B cell (primary cell): ENCODE measurements at regions of chr10 and their contacts with region 1.

Region 1: GRCh38 chr10:58177362-58177947 is 90.2 kb downstream of the IPMK start:
- DNase-seq: peak; percentile 37
- ATAC-seq: peak; percentile 31
- H3K4me3 ChIP-seq: no peak overlapping the region
- H3K4me3 Mint-ChIP-seq: no peak overlapping the region
- H3K27ac ChIP-seq: no peak overlapping the region
- H3K27ac Mint-ChIP-seq: no peak overlapping the region
- H3K4me1 ChIP-seq: no peaks in the 10 kb centered on the region
- H3K4me1 Mint-ChIP-seq: no peaks in the 10 kb centered on the region
- H3K27me3 ChIP-seq: no peaks in the 10 kb centered on the region
- H3K27me3 Mint-ChIP-seq: no peaks in the 10 kb centered on the region
- CTCF ChIP-seq: peak; percentile 82

Region 2: GRCh38 chr10:58282615-58283014 is 105.2 kb after region 1 on chr10:
- CTCF ChIA-PET with region 1: interaction called, 13 read pairs
- POLR2A ChIA-PET with region 1: no interaction called
- intact Hi-C with region 1: no loop called
- DNase-seq: peak; percentile 66
- ATAC-seq: peak; percentile 85
- H3K4me3 ChIP-seq: peak overlapping the region in 1 of 5 experiments; percentile 15
- H3K4me3 Mint-ChIP-seq: peak overlapping the region; percentile 55
- H3K27ac ChIP-seq: peak overlapping the region in 1 of 2 donors; percentile 71
- H3K27ac Mint-ChIP-seq: peak overlapping the region; percentile 88
- H3K4me1 ChIP-seq: peaks cover 9 to 12% of the 10 kb centered on the region in 2 donors
- H3K4me1 Mint-ChIP-seq: peaks cover 17% of the 10 kb centered on the region
- H3K27me3 ChIP-seq: no peaks in the 10 kb centered on the region
- H3K27me3 Mint-ChIP-seq: no peaks in the 10 kb centered on the region
- CTCF ChIP-seq: no peak

Region 3: DNA sequence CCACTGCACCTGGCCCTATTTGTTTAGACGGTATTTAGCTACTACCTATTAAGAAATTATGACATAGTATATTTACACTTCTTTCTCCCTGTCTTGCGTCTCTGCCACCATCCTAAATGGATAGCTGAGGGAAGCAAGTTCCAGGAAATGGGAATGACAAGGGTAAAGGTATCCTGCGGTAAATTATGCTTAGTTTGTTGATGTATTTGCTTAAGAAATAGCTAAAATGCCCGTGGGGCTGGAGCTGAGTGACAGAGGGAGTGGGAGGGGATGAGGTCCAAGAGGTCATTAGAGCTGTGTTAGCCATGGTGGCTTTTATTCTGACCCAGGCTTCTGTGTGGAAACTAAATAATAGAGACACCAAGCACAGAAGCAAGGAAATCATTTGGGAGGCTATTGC is 128.4 kb after region 1 on chr10:
- CTCF ChIA-PET with region 1: interaction called, 22 read pairs
- POLR2A ChIA-PET with region 1: no interaction called
- intact Hi-C with region 1: no loop called
- DNase-seq: no peak
- ATAC-seq: no peak
- H3K4me3 ChIP-seq: no peak overlapping the region
- H3K4me3 Mint-ChIP-seq: no peak overlapping the region
- H3K27ac ChIP-seq: no peak overlapping the region
- H3K27ac Mint-ChIP-seq: no peak overlapping the region
- H3K4me1 ChIP-seq: no peaks in the 10 kb centered on the region
- H3K4me1 Mint-ChIP-seq: no peaks in the 10 kb centered on the region
- H3K27me3 ChIP-seq: peaks cover 0 to 14% (median 8%) of the 10 kb centered on the region in 4 experiments
- H3K27me3 Mint-ChIP-seq: peaks cover 52% of the 10 kb centered on the region
- CTCF ChIP-seq: no peak

Region 4: DNA sequence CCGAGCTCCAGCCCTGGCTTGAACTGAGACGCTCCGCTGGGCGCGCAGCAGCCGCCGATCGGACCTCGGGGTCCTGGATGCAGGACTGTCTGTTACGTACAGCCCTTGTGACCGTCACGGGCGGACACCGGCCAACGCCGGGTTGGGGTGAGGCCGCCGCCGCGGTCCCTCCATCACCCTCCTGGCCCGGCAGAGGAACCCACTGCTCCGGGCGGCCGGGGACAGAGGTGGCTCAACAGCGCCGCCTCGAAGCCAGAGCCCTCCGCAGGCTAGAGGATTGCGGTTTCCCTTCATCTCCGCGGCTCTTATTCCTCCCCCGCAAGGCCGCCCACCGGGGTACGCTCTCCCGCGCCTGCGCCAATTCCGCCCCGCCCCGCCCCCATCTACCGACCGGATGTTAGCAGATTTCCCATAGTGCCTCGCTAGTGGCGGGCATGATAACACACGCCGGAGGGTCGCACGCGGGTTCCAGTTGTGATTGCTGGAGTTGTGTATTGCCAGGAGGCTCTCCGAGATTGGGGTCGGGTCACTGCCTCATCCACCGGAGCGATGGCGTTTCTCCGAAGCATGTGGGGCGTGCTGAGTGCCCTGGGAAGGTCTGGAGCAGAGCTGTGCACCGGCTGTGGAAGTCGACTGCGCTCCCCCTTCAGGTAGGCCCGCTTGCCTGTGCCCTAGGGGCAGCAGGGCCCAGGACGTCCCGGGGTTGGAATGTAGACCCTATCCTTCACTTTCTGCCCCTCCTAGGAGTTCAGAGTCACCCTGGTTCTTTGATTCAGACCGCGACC is 207.7 kb after region 1 on chr10 and contains the start of gene TFAM:
- CTCF ChIA-PET with region 1: interaction called, 5 read pairs
- POLR2A ChIA-PET with region 1: no interaction called
- intact Hi-C with region 1: loop called (anchors 5 kb)
- DNase-seq: peak; percentile 97
- ATAC-seq: peak; percentile 84
- H3K4me3 ChIP-seq: peak within 1 kb of the TSS; percentile 73 to 89 (median 82)
- H3K4me3 Mint-ChIP-seq: peak within 1 kb of the TSS; percentile 92
- H3K27ac ChIP-seq: peak within 1 kb of the TSS; percentile 84 to 97
- H3K27ac Mint-ChIP-seq: peak within 1 kb of the TSS; percentile 96
- H3K4me1 ChIP-seq: peaks cover 24 to 29% of the 10 kb centered on the region in 2 donors
- H3K4me1 Mint-ChIP-seq: peaks cover 43% of the 10 kb centered on the region
- H3K27me3 ChIP-seq: no peaks in the 10 kb centered on the region
- H3K27me3 Mint-ChIP-seq: no peaks in the 10 kb centered on the region
- CTCF ChIP-seq: peak; percentile 47
- total RNA-seq, gene TFAM: 38.4 and 40.6 TPM in 2 replicates